ENCODE measurements at regions of chr3 and their contacts with region 1.

Region 1: DNA sequence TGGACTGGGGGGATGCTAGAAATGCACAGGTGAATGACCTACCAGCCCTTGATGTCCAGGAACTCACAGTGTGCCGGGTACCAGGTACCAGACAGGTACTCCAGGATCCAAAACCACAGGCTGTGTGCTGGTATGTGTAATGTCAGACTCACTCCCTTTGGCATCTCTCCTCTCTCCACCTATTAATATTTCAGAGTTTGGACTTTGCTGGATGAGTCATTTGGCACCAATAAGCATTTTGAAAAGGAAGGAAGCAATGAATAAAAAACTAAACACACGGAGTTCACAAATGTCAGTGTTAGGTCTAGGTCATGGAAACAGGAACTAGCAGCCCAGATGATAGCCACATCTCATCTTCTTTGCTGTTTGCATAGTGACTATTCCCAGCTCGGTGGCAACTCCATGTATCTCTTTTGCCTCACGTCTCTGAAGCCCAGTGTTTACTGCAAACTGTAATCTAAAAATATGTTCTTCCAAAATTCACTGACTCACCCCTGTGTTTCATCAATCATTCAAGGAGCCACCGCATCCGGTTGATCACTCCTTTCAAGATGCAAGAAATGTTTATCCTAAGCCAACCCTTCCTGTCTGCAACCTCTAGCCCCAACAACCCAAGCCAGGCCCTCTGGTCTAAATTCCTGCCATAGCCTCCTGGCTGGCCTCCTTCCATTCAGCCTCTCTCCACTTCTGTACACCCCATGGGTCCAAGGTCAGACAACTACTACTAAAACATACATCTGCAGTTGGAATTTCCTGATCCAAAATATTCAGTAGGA is 8.4 kb downstream of the ITGB5 start:
- DNase-seq: peak; percentile 90
- ATAC-seq: peak; percentile 90
- H3K4me3 ChIP-seq: no peak overlapping the region
- H3K27ac ChIP-seq: peak overlapping the region; percentile 70
- H3K4me1 ChIP-seq: peaks cover 45% of the 10 kb centered on the region
- H3K27me3 ChIP-seq: no peaks in the 10 kb centered on the region
- CTCF ChIP-seq: no peak

Region 2: GRCh38 chr3:124786441-124787241 is 92.1 kb before region 1 on chr3:
- CTCF ChIA-PET with region 1: interaction called, 7 read pairs
- POLR2A ChIA-PET with region 1: no interaction called
- intact Hi-C with region 1: loop called (anchors 2 kb)
- DNase-seq: peak; percentile 68
- ATAC-seq: peak; percentile 81
- H3K4me3 ChIP-seq: no peak overlapping the region
- H3K27ac ChIP-seq: peak overlapping the region; percentile 37
- H3K4me1 ChIP-seq: peaks cover 6% of the 10 kb centered on the region
- H3K27me3 ChIP-seq: no peaks in the 10 kb centered on the region
- CTCF ChIP-seq: peak; percentile 66

Region 3: DNA sequence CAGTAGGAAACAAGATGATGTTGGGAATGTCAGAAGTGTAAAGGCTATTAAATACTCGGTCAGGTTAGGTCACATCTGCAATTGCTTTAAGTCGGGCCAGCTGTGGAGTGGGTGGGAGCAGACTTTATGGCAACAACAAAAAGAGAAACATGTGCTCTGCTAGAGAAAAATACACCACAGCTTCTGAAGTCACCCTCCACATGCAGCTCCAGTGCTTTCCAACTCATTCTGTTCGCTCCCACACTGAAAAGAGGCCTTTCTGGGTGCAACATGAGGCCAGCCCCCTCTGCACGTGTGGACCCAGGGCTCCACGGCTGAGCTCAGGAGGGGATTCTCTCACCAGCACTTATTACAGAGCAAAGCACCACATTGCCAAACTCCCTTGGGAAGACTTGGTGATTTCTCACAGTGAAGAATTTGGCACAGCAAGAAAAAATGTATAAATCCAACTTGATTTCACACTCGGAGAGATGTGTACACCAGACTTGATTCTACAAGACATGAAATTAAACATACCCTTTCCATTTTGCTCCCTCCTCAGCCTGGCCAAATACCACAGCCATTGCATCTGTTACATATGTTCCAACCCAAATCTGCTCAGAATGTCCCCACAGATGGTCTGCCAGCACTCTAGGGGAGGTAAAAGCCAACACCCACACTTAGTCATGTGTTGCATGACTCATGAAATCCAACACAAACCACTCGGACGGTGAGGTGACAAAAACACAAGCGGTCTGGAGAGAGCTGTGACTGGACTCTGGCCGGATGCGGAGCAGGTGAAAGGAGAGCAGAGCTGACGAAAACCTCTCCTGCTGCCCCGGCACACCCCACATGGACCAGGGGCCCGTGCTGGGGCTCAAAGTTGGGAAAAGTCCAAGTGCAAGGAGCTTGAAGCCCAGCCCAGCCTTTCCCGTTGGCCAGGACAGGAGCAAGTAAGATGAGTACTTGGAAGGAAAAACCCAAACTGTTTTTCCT is 66.2 kb before region 1 on chr3:
- CTCF ChIA-PET with region 1: no interaction called
- POLR2A ChIA-PET with region 1: no interaction called
- intact Hi-C with region 1: loop called (anchors 2 kb)
- DNase-seq: peak; percentile 90
- ATAC-seq: peak; percentile 89
- H3K4me3 ChIP-seq: peak overlapping the region; percentile 27; the same call in 1 of the 2 replicates
- H3K27ac ChIP-seq: peak overlapping the region; percentile 82
- H3K4me1 ChIP-seq: peaks cover 51% of the 10 kb centered on the region
- H3K27me3 ChIP-seq: no peaks in the 10 kb centered on the region
- CTCF ChIP-seq: no peak

Region 4: GRCh38 chr3:124837730-124838186 is 41.0 kb before region 1 on chr3:
- CTCF ChIA-PET with region 1: no interaction called
- POLR2A ChIA-PET with region 1: no interaction called
- intact Hi-C with region 1: loop called (anchors 1 kb)
- DNase-seq: peak; percentile 85
- ATAC-seq: peak; percentile 82
- H3K4me3 ChIP-seq: peak overlapping the region; percentile 35; the same call in 1 of the 2 replicates
- H3K27ac ChIP-seq: peak overlapping the region; percentile 100
- H3K4me1 ChIP-seq: peaks cover 61% of the 10 kb centered on the region
- H3K27me3 ChIP-seq: no peaks in the 10 kb centered on the region
- CTCF ChIP-seq: no peak

Region 5: GRCh38 chr3:124845406-124845805 is 33.3 kb before region 1 on chr3:
- CTCF ChIA-PET with region 1: no interaction called
- POLR2A ChIA-PET with region 1: interaction called, 3 read pairs
- intact Hi-C with region 1: loop called (anchors 1 kb)
- DNase-seq: peak; percentile 87
- ATAC-seq: peak; percentile 97
- H3K4me3 ChIP-seq: no peak overlapping the region; the same call in 1 of the 2 replicates
- H3K27ac ChIP-seq: peak overlapping the region; percentile 86
- H3K4me1 ChIP-seq: peaks cover 19% of the 10 kb centered on the region
- H3K27me3 ChIP-seq: no peaks in the 10 kb centered on the region
- CTCF ChIP-seq: no peak

Region 6: DNA sequence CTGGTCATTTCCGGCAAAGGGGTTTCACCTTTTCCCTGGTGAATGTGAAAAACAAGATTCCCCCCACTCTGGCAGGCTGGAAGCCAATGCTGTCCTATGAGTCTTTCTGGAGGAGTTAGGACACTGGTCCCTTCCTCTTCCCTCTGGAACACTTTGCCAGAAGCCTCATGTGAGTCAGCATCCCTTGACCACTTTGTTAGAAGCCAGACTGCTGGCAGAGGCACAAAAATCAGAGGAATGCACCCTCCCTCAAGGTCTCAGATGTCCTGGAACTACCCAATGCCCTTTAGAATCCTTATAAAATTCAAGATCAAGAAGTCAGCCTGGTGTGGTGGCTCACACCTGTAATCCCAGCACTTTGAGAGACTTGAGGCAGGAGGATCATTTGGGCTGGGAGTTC is 18.1 kb before region 1 on chr3:
- CTCF ChIA-PET with region 1: no interaction called
- POLR2A ChIA-PET with region 1: no interaction called
- intact Hi-C with region 1: loop called (anchors 1 kb)
- DNase-seq: peak; percentile 96
- ATAC-seq: peak; percentile 98
- H3K4me3 ChIP-seq: no peak overlapping the region
- H3K27ac ChIP-seq: peak overlapping the region; percentile 42
- H3K4me1 ChIP-seq: peaks cover 20% of the 10 kb centered on the region
- H3K27me3 ChIP-seq: no peaks in the 10 kb centered on the region
- CTCF ChIP-seq: no peak

Region 7: GRCh38 chr3:124905849-124906248 is 27.1 kb after region 1 on chr3:
- CTCF ChIA-PET with region 1: no interaction called
- POLR2A ChIA-PET with region 1: no interaction called
- intact Hi-C with region 1: loop called (anchors 2 kb)
- DNase-seq: peak; percentile 7
- ATAC-seq: no peak
- H3K4me3 ChIP-seq: no peak overlapping the region
- H3K27ac ChIP-seq: no peak overlapping the region
- H3K4me1 ChIP-seq: 0 out of 2 replicates have a peak, but pooled peaks cover 1% of the 10 kb centered on the region
- H3K27me3 ChIP-seq: no peaks in the 10 kb centered on the region
- CTCF ChIP-seq: peak; percentile 29; the same call in 1 of the 2 replicates

Region 8: GRCh38 chr3:124923833-124924232 is 45.1 kb after region 1 on chr3:
- CTCF ChIA-PET with region 1: no interaction called
- POLR2A ChIA-PET with region 1: no interaction called
- intact Hi-C with region 1: no loop called
- DNase-seq: no peak
- ATAC-seq: no peak
- H3K4me3 ChIP-seq: no peak overlapping the region
- H3K27ac ChIP-seq: no peak overlapping the region
- H3K4me1 ChIP-seq: no peaks in the 10 kb centered on the region; the same call in 1 of the 2 replicates
- H3K27me3 ChIP-seq: no peaks in the 10 kb centered on the region
- CTCF ChIP-seq: no peak

Region 9: GRCh38 chr3:124938896-124939295 is 60.1 kb after region 1 on chr3:
- CTCF ChIA-PET with region 1: no interaction called
- POLR2A ChIA-PET with region 1: no interaction called
- intact Hi-C with region 1: no loop called
- DNase-seq: no peak
- ATAC-seq: no peak
- H3K4me3 ChIP-seq: no peak overlapping the region
- H3K27ac ChIP-seq: no peak overlapping the region
- H3K4me1 ChIP-seq: peaks cover 4% of the 10 kb centered on the region; the same call in 1 of the 2 replicates
- H3K27me3 ChIP-seq: no peaks in the 10 kb centered on the region
- CTCF ChIP-seq: no peak

Region 10: GRCh38 chr3:124951511-124952281 is 72.9 kb after region 1 on chr3:
- CTCF ChIA-PET with region 1: no interaction called
- POLR2A ChIA-PET with region 1: no interaction called
- intact Hi-C with region 1: no loop called
- DNase-seq: peak; percentile 60
- ATAC-seq: peak; percentile 74
- H3K4me3 ChIP-seq: no peak overlapping the region
- H3K27ac ChIP-seq: peak overlapping the region; percentile 78
- H3K4me1 ChIP-seq: peaks cover 8% of the 10 kb centered on the region; the same call in 1 of the 2 replicates
- H3K27me3 ChIP-seq: no peaks in the 10 kb centered on the region
- CTCF ChIP-seq: no peak

Measured in PC-3 (cell line).